ENCODE measurements at regions of chr3 and their contacts with region 1.

Region 1: GRCh38 chr3:98151241-98151640 is 4.0 kb downstream of the OR5H14 start:
- DNase-seq: no peak
- H3K4me3 ChIP-seq: no peak overlapping the region
- H3K27ac ChIP-seq: no peak overlapping the region
- H3K4me1 ChIP-seq: no peaks in the 10 kb centered on the region
- H3K27me3 ChIP-seq: no peaks in the 10 kb centered on the region
- CTCF ChIP-seq: no peak
- EP300 ChIP-seq: no peak
- POLR2A ChIP-seq: no peak

Region 2: GRCh38 chr3:97148931-97149330 is 1002.3 kb before region 1 on chr3:
- intact Hi-C with region 1: no loop called
- DNase-seq: no peak
- H3K4me3 ChIP-seq: no peak overlapping the region
- H3K27ac ChIP-seq: no peak overlapping the region
- H3K4me1 ChIP-seq: no peaks in the 10 kb centered on the region
- H3K27me3 ChIP-seq: no peaks in the 10 kb centered on the region
- CTCF ChIP-seq: no peak
- EP300 ChIP-seq: no peak
- POLR2A ChIP-seq: no peak

Region 3: DNA sequence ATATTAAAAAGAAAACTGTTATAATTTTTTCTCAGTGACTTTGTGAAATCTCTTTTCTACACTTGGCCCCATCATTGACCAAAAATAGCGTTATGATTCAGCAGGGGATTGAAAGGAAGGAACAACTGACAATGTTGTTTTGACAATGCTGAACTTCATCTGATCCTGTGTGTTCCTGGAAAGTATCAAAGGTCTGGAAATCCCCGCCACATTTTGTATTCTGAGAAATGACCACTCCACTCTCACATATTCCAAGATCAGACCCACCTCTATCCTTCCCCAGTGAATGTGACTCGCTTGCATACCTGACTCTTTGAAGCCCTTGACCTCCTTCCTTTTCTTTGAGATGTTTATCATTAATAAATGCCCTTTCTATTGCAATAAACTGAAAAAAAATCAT is 169.4 kb before region 1 on chr3:
- intact Hi-C with region 1: no loop called
- DNase-seq: no peak
- H3K4me3 ChIP-seq: no peak overlapping the region
- H3K27ac ChIP-seq: no peak overlapping the region
- H3K4me1 ChIP-seq: peaks cover 2% of the 10 kb centered on the region
- H3K27me3 ChIP-seq: no peaks in the 10 kb centered on the region
- CTCF ChIP-seq: no peak
- EP300 ChIP-seq: no peak
- POLR2A ChIP-seq: no peak

Region 4: DNA sequence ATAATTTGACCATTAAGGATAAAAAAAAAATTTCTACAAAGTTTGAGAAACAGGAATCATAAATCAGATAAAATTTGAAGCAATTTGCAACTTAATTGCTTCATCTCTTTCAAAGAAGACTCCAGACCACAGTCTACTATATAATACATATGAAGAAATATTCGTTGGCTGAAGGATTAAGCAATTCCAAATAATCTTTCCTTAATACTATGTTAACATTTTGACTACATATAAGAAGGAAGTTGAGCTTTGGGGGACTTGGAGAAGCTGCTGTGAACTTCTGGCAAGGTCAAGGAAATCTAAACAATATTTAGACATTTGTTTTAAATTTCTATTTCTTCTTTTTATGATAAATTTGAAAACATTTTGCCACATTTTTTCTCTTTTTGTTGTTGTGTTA is 102.7 kb before region 1 on chr3:
- intact Hi-C with region 1: no loop called
- DNase-seq: no peak
- H3K4me3 ChIP-seq: no peak overlapping the region
- H3K27ac ChIP-seq: no peak overlapping the region
- H3K4me1 ChIP-seq: no peaks in the 10 kb centered on the region
- H3K27me3 ChIP-seq: no peaks in the 10 kb centered on the region
- CTCF ChIP-seq: no peak
- EP300 ChIP-seq: no peak
- POLR2A ChIP-seq: no peak

Region 5: GRCh38 chr3:98215051-98215450 is 63.8 kb after region 1 on chr3:
- intact Hi-C with region 1: loop called in 1 of 4 experiments (anchors 10 kb)
- DNase-seq: no peak
- H3K4me3 ChIP-seq: no peak overlapping the region
- H3K27ac ChIP-seq: no peak overlapping the region
- H3K4me1 ChIP-seq: no peaks in the 10 kb centered on the region
- H3K27me3 ChIP-seq: no peaks in the 10 kb centered on the region
- CTCF ChIP-seq: no peak
- EP300 ChIP-seq: no peak
- POLR2A ChIP-seq: no peak

Region 6: GRCh38 chr3:98359993-98360675 is 208.9 kb after region 1 on chr3:
- intact Hi-C with region 1: no loop called
- DNase-seq: no peak
- H3K4me3 ChIP-seq: no peak overlapping the region
- H3K27ac ChIP-seq: no peak overlapping the region
- H3K4me1 ChIP-seq: no peaks in the 10 kb centered on the region
- H3K27me3 ChIP-seq: no peaks in the 10 kb centered on the region
- CTCF ChIP-seq: no peak
- EP300 ChIP-seq: no peak
- POLR2A ChIP-seq: no peak